ENCODE measurements at regions of chr6 and their contacts with region 1.

Region 1: GRCh38 chr6:154928325-154928922 is 66.7 kb upstream of the TIAM2 start:
- DNase-seq: peak in 1 of 2 donors; percentile 58
- ATAC-seq: peak in 6 of 8 donors; percentile 49 to 71 (median 64)
- H3K4me3 ChIP-seq: no peak overlapping the region
- H3K27ac ChIP-seq: no peak overlapping the region
- H3K4me1 ChIP-seq: peaks cover 0 to 29% (median 9%) of the 10 kb centered on the region in 9 donors
- H3K27me3 ChIP-seq: no peaks in the 10 kb centered on the region
- CTCF ChIP-seq: peak; percentile 55 to 88 (median 80)

Region 2: DNA sequence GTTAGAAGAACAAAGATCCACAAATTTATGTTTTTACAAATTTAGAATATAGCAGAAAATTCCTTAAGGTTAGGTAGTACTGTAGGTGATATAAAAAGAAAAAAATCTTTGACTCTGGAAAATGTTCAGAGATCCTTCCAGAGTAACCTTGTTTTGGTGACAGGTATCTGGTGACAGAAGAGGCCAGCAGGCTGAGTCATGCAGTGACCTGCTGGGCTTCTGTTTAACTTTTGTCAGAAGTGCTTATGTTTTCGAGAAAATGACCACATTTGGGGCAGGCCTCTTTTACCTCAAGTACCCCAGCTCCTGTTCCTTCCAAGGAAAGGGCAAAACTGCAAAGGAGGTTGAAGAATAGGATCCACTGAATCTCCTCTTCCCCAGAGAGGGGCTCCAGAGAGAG is 324.9 kb after region 1 on chr6:
- intact Hi-C with region 1: loop called in 3 of 10 experiments (anchors 5 to 10 kb)
- DNase-seq: no peak
- ATAC-seq: peak in 6 of 8 donors; percentile 34 to 67 (median 62)
- H3K4me3 ChIP-seq: no peak overlapping the region
- H3K27ac ChIP-seq: peak overlapping the region in 8 of 10 donors; percentile 14 to 67 (median 47)
- H3K4me1 ChIP-seq: peaks cover 0 to 28% (median 9%) of the 10 kb centered on the region in 9 donors
- H3K27me3 ChIP-seq: no peaks in the 10 kb centered on the region
- CTCF ChIP-seq: no peak